ENCODE measurements at regions of chr15 and their contacts with region 1.

Region 1: DNA sequence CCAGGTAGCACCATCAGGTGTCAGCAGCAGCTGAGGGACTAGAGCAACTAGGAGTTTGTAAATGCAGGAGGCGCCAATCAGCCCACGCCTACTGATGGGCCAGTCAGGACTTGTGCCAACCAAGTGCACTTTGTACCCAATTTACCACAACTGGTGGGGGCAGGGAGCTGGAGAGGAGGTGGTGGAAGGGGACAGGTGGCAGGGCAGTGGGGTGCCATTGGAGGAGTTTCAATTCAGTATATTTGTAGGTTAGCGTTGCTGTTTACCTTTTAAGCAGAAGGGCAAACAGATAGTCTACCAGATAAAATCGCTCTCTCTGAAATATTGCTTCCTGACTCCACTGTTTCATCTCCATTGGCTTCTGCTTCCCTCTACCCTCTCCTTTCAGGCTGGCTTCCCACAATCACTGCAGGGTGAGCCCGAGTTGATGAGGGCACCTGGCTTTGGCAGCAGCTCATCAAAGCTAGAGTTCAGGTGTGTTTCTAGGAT is 75.7 kb downstream of the TRIM69 start:
- DNase-seq: no peak
- ATAC-seq: peak; percentile 31

Region 2: GRCh38 chr15:44910981-44911625 is 99.0 kb after region 1 on chr15:
- intact Hi-C with region 1: loop called (anchors 10 kb)
- DNase-seq: no peak
- ATAC-seq: no peak

Measured in Right ventricle myocardium inferior (tissue), 1 donor.